HEK293 (cell line): ENCODE measurements at regions of chr9 and their contacts with region 1.

Region 1: GRCh38 chr9:34899535-34900158 is 58.4 kb upstream of the PHF24 start:
- H3K4me3 ChIP-seq: no peak overlapping the region
- H3K27ac ChIP-seq: no peak overlapping the region
- H3K4me1 ChIP-seq: no peaks in the 10 kb centered on the region
- CTCF ChIP-seq: peak; percentile 49

Region 2: DNA sequence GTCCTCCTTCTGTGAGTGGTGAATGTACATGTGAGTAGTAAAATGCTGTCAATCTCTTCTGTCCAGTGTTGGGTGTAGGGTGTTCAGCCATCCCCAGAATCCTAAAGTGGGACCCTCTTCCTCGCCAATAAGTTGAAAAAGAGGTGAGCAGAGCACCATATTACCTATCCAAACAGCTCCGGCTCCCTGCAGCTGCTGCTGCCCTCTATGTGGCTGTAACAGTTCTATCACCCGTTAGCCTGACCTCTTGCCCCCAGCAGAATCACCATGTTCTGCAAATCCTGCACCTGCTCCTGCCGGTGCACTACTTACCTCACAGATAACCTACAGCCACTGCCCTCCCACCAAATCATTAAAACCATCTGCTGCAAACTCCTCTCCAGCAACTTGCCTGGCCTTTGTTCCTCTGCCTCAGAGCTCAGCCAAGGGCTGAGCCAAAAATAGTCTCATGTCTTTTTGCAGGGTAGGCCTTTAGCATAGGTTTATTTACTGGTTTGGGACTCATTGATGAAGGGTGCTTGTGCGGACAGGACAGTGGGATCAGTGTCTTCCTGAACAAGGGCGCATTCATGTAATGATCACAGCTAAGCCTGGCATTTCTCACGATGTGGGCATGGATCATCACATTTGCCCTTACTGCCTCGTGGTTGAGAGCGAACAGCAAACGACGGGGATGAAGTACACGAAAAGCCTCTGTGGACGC is 140.1 kb before region 1 on chr9:
- CTCF ChIA-PET with region 1: interaction called, 22 read pairs
- POLR2A ChIA-PET with region 1: no interaction called
- H3K4me3 ChIP-seq: no peak overlapping the region
- H3K27ac ChIP-seq: no peak overlapping the region
- H3K4me1 ChIP-seq: no peaks in the 10 kb centered on the region
- CTCF ChIP-seq: no peak

Region 3: GRCh38 chr9:34989003-34989945 is 89.6 kb after region 1 on chr9 and contains the start of gene DNAJB5:
- CTCF ChIA-PET with region 1: interaction called, 124 read pairs
- POLR2A ChIA-PET with region 1: interaction called, 6 read pairs
- H3K4me3 ChIP-seq: peak within 1 kb of the TSS; percentile 76
- H3K27ac ChIP-seq: no peak within 1 kb of the TSS; the same call in 1 of the 2 replicates
- H3K4me1 ChIP-seq: peaks cover 2% of the 10 kb centered on the region; the same call in 1 of the 2 replicates
- CTCF ChIP-seq: no peak

Region 4: GRCh38 chr9:35001803-35002502 is 102.3 kb after region 1 on chr9:
- CTCF ChIA-PET with region 1: interaction called, 14 read pairs
- POLR2A ChIA-PET with region 1: no interaction called
- H3K4me3 ChIP-seq: no peak overlapping the region
- H3K27ac ChIP-seq: no peak overlapping the region
- H3K4me1 ChIP-seq: no peaks in the 10 kb centered on the region
- CTCF ChIP-seq: no peak

Region 5: GRCh38 chr9:35096035-35096849 is 196.6 kb after region 1 on chr9 and contains the start of gene PIGO:
- CTCF ChIA-PET with region 1: interaction called, 29 read pairs
- POLR2A ChIA-PET with region 1: no interaction called
- H3K4me3 ChIP-seq: peak within 1 kb of the TSS; percentile 90
- H3K27ac ChIP-seq: peak within 1 kb of the TSS; percentile 84
- H3K4me1 ChIP-seq: no peaks in the 10 kb centered on the region
- CTCF ChIP-seq: peak; percentile 83

Region 6: DNA sequence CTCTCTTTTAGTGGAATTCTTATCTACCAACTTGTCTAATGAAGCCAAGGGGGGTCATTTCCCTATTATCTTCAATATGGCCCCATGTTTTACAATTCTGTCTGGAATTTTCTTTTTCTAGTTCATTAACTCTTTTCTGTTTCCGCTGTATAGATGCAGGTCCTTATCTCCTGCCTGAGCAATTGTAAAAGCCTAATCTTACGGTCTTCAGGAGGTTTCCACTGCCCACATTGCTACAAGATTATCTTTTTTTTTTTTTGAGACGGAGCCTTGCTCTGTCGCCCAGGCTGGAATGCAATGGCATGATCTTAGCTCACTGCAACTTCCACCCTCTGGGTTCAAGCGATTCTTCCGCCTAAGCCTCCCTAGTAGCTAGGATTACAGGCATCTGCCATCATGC is 394.4 kb after region 1 on chr9:
- CTCF ChIA-PET with region 1: no interaction called
- POLR2A ChIA-PET with region 1: no interaction called
- H3K4me3 ChIP-seq: no peak overlapping the region
- H3K27ac ChIP-seq: no peak overlapping the region
- H3K4me1 ChIP-seq: no peaks in the 10 kb centered on the region
- CTCF ChIP-seq: no peak

Region 7: GRCh38 chr9:35481347-35481975 is 581.8 kb after region 1 on chr9:
- CTCF ChIA-PET with region 1: interaction called, 11 read pairs
- POLR2A ChIA-PET with region 1: no interaction called
- H3K4me3 ChIP-seq: no peak overlapping the region
- H3K27ac ChIP-seq: no peak overlapping the region
- H3K4me1 ChIP-seq: no peaks in the 10 kb centered on the region
- CTCF ChIP-seq: no peak